IMR-90 (cell line): ENCODE measurements at regions of chr18 and their contacts with region 1.

Region 1: DNA sequence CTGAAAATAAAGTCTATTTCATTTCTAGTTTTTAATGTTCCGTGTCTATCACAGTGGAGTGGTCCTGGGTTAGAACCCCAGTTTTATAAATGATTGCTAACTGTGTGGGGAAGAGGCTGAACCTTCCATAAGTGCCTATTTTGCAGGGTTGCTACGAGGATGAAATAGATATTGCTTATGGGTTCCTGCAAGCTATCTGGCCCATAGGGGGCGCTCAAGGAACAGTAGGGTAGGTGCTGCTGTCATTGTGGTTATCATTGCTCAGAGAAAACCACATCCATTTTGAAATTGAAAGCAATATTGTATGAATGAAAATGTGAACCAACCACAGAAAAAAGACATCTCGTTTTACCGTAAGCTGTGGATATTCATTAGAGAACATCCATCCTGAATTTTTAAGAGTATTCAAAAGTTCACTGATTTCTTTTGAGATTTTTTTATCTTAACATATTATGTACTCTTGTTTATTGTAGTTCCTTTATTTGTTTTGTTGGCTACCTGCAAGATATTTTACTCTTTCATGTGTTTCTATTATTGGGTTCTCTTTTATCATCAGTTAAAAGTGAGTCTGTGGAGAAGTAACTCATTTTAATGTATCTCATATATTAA is 261.6 kb downstream of the NAPG start:
- DNase-seq: peak; percentile 80
- ATAC-seq: peak; percentile 79
- H3K4me3 ChIP-seq: no peak overlapping the region
- H3K27ac ChIP-seq: no peak overlapping the region
- H3K4me1 ChIP-seq: peaks cover 3% of the 10 kb centered on the region
- H3K27me3 ChIP-seq: no peaks in the 10 kb centered on the region
- CTCF ChIP-seq: peak; percentile 84
- POLR2A ChIP-seq: no peak
- RAD21 ChIP-seq: peak; percentile 75

Region 2: GRCh38 chr18:10776493-10776892 is 10.9 kb before region 1 on chr18:
- CTCF ChIA-PET with region 1: interaction called, 12 read pairs
- POLR2A ChIA-PET with region 1: no interaction called
- dilution Hi-C with region 1: no loop called
- in situ Hi-C with region 1: no loop called
- intact Hi-C with region 1: no loop called
- DNase-seq: no peak
- ATAC-seq: no peak
- H3K4me3 ChIP-seq: no peak overlapping the region
- H3K27ac ChIP-seq: no peak overlapping the region
- H3K4me1 ChIP-seq: no peaks in the 10 kb centered on the region; the same call in 1 of the 2 replicates
- H3K27me3 ChIP-seq: no peaks in the 10 kb centered on the region
- CTCF ChIP-seq: no peak
- POLR2A ChIP-seq: no peak
- RAD21 ChIP-seq: no peak

Region 3: DNA sequence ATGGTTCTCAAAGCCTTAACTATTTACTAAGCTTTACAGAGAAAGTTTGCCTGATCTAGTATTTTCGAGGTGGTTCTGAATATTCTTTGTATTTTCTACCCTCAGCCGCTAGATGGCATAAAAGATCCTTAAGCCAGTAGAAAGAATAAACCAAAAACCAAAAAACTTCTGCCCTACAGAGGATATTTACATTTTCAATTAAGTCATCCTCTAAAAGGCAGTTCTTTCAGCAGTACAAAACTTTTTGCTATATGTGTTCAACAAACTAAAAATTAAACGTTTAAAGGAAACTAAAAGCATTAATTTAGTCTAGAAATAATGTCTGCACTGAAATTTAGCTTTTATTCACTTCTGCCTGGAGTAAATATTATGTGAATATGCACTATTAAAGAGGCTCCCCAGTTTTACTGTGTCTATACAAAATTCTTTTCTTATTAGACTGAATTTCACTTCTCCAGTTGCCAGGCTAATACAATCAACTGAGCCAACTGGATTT is 64.5 kb after region 1 on chr18:
- CTCF ChIA-PET with region 1: interaction called, 4 read pairs
- POLR2A ChIA-PET with region 1: no interaction called
- dilution Hi-C with region 1: no loop called
- in situ Hi-C with region 1: no loop called
- intact Hi-C with region 1: loop called (anchors 5 kb)
- DNase-seq: peak; percentile 81
- ATAC-seq: peak; percentile 90
- H3K4me3 ChIP-seq: no peak overlapping the region
- H3K27ac ChIP-seq: peak overlapping the region; percentile 50; the same call in 1 of the 2 replicates
- H3K4me1 ChIP-seq: peaks cover 2% of the 10 kb centered on the region; the same call in 1 of the 2 replicates
- H3K27me3 ChIP-seq: no peaks in the 10 kb centered on the region
- CTCF ChIP-seq: peak; percentile 93
- POLR2A ChIP-seq: no peak
- RAD21 ChIP-seq: peak; percentile 93

Region 4: DNA sequence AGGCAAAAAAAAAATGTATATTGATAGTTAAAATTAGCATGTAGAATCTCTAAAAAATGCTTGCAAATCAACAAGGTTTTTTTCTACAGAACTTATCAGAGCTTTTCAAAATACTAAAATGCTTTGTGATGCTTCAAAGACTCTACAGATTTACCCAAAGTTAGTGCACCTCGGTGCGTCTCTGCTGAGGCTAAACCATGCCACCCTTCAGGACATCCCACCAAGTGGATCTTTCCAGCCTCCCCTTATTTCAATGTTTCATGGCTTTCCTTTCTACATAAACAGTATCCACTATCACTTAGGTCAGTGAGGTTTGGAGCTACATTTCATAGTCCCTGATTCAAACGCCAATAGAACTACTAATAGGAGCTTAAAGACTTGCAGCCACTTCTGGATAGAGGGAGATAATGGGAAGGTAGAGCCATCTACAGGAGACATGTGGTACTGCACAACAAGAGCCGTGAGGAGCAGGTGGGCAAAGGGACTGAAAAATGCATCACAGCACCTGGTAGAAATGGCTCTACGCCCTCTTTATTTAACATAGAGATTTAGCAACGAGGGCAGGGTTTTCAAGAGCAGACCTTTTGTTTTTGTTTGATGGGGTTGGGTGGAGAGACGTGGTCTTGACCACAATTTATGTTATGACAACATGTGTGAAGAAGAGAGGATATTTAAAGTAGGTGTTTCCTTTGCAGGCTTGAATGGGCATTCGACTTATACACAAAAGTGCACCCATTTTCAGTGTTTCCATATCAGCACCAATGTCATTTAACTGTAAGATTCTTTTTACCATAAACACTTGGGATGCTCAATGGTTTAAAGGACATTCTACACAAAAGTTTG is 765.9 kb after region 1 on chr18:
- CTCF ChIA-PET with region 1: no interaction called
- POLR2A ChIA-PET with region 1: no interaction called
- dilution Hi-C with region 1: no loop called
- in situ Hi-C with region 1: no loop called
- intact Hi-C with region 1: loop called (anchors 10 kb)
- DNase-seq: peak; percentile 59
- ATAC-seq: peak; percentile 99
- H3K4me3 ChIP-seq: no peak overlapping the region
- H3K27ac ChIP-seq: no peak overlapping the region
- H3K4me1 ChIP-seq: no peaks in the 10 kb centered on the region
- H3K27me3 ChIP-seq: peaks cover 9% of the 10 kb centered on the region
- CTCF ChIP-seq: peak; percentile 86
- POLR2A ChIP-seq: no peak
- RAD21 ChIP-seq: peak; percentile 89